ENCODE measurements at regions of chr9 and their contacts with region 1.

Region 1: DNA sequence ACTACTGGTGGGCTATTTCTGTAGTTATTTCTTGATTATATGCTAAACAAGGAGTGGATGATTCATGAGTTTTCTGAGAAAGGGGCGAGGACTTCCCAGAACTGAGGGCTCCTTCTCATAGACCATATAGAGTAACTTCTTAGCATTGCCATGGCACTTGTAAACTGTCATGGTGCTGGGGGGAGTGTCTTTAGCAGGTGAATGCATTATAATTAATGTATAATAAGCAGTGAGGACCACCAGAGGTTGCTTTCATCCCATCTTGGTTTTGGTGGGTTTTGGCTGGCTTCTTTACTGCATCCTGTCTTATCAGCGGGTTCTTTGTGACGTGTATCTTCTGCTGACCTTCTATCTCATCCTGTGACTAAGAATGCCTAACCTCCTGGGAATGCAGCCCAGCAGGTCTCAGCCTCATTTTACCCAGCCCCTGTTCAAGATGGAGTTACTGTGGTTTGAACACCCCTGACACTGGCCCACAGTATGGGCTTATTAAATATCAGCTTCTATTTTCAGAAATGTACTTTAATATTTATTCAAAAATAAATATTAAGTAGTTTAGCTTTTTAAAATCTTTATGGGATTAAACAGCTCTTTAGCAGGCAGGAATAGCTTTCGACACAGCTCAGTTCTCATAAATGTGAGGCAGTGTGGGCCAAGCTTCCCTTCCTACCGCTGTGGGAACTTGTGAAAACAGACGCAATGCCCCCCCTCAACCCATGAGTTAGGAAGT is 44.4 kb downstream of the GALNT12 start:
- DNase-seq: no peak

Region 2: GRCh38 chr9:99140685-99141314 is 288.9 kb after region 1 on chr9:
- intact Hi-C with region 1: loop called (anchors 10 kb)
- DNase-seq: peak in 39 of 42 donors; percentile 20 to 78 (median 57)

Measured in head of caudate nucleus (tissue), 42 donors.